Keratinocyte (primary cell): ENCODE measurements at regions of chr2 and their contacts with region 1.

Region 1: GRCh38 chr2:70069049-70069448 is 18.2 kb upstream of the PCBP1 start:
- DNase-seq: no peak
- H3K4me3 ChIP-seq: no peak overlapping the region
- H3K27ac ChIP-seq: peak overlapping the region; percentile 42
- H3K4me1 ChIP-seq: peaks cover 8% of the 10 kb centered on the region
- H3K27me3 ChIP-seq: no peaks in the 10 kb centered on the region
- CTCF ChIP-seq: no peak

Region 2: GRCh38 chr2:69483696-69484095 is 585.4 kb before region 1 on chr2:
- dilution Hi-C with region 1: no loop called
- DNase-seq: no peak
- H3K4me3 ChIP-seq: no peak overlapping the region
- H3K27ac ChIP-seq: no peak overlapping the region
- H3K4me1 ChIP-seq: no peaks in the 10 kb centered on the region
- H3K27me3 ChIP-seq: no peaks in the 10 kb centered on the region
- CTCF ChIP-seq: no peak

Region 3: GRCh38 chr2:69933839-69934613 is 135.0 kb before region 1 on chr2:
- dilution Hi-C with region 1: loop called (anchors 10 kb)
- DNase-seq: no peak
- H3K4me3 ChIP-seq: peak overlapping the region in 1 of 3 experiments; percentile 16
- H3K27ac ChIP-seq: peak overlapping the region; percentile 84
- H3K4me1 ChIP-seq: peaks cover 29% of the 10 kb centered on the region
- H3K27me3 ChIP-seq: no peaks in the 10 kb centered on the region
- CTCF ChIP-seq: no peak